Naive thymus-derived CD4-positive, alpha-beta T cell (primary cell): ENCODE measurements at regions of chrX and their contacts with region 1.

Region 1: GRCh38 chrX:130165703-130166502 is at the start of gene AIFM1:
- DNase-seq: peak; percentile 68 to 90 (median 84)
- ATAC-seq: peak; percentile 94
- H3K4me3 ChIP-seq: peak within 1 kb of the TSS; percentile 87
- H3K4me3 Mint-ChIP-seq: peak within 1 kb of the TSS; percentile 84 to 98 (median 90)
- H3K27ac ChIP-seq: peak within 1 kb of the TSS; percentile 78
- H3K27ac Mint-ChIP-seq: peak within 1 kb of the TSS; percentile 85 to 96 (median 92)
- H3K4me1 ChIP-seq: peaks cover 8 to 10% of the 10 kb centered on the region in 2 donors
- H3K4me1 Mint-ChIP-seq: peaks cover 6 to 41% (median 32%) of the 10 kb centered on the region in 7 donors
- H3K27me3 ChIP-seq: no peaks in the 10 kb centered on the region
- H3K27me3 Mint-ChIP-seq: no peaks in the 10 kb centered on the region
- total RNA-seq, gene AIFM1: 11.6 to 35.8 (median 21.1) TPM

Region 2: DNA sequence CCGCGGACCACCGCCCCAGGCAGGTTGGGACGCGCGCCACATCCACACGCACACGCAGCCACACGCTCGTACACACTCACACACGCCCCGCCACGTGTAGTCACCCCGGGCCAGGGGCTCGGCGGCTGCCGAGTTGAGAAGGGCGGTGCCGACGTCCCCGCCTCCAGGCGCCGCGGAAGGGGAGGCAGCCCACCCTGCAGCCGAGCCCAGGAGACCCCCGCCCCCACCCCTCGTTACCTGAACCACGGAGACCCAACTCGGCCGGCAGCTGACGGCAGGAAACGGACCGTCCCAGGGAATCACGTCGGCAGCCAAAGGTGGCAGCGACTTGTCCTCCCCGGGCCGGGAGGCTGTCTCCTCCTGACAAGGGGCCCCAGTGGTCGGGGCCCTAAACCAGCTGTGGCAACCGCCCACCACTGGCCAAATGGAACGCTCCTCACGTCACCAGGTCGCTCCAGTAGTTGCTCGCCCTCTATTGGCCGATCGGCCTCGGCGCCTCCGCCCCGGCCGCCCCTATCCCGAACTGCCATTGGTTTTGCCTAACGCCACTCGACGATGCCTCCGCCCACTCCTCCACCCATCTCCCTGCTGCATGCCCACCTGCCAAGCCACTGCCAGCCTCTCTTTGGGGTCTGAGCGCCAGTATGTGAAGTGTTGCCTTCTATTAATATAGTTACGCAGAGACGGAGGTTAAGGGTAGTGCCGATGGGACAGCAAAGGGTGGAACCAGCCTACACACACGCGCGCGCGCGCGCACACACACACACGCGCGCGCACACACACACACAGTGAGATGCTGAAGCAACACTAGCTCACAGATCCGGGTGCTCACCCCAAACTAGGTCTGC is 322.2 kb before region 1 on chrX and contains the start of gene ZDHHC9:
- CTCF ChIA-PET with region 1: no interaction called
- POLR2A ChIA-PET with region 1: no interaction called
- intact Hi-C with region 1: loop called in 1 of 2 experiments (anchors 5 kb)
- DNase-seq: peak; percentile 62 to 85 (median 81)
- ATAC-seq: peak; percentile 98
- H3K4me3 ChIP-seq: peak within 1 kb of the TSS; percentile 95
- H3K4me3 Mint-ChIP-seq: peak within 1 kb of the TSS; percentile 86 to 98 (median 92)
- H3K27ac ChIP-seq: peak within 1 kb of the TSS; percentile 76
- H3K27ac Mint-ChIP-seq: peak within 1 kb of the TSS; percentile 68 to 91 (median 80)
- H3K4me1 ChIP-seq: peaks cover 5 to 15% of the 10 kb centered on the region in 2 donors
- H3K4me1 Mint-ChIP-seq: peaks cover 4 to 39% (median 28%) of the 10 kb centered on the region in 7 donors
- H3K27me3 ChIP-seq: no peaks in the 10 kb centered on the region
- H3K27me3 Mint-ChIP-seq: no peaks in the 10 kb centered on the region
- total RNA-seq, gene ZDHHC9: 4.9 to 9.1 (median 7.1) TPM

Region 3: GRCh38 chrX:129982274-129983251 is 183.3 kb before region 1 on chrX and contains the start of gene BCORL1:
- CTCF ChIA-PET with region 1: no interaction called
- POLR2A ChIA-PET with region 1: no interaction called
- intact Hi-C with region 1: loop called in 1 of 2 experiments (anchors 2 kb)
- DNase-seq: peak; percentile 62 to 89 (median 84)
- ATAC-seq: peak; percentile 96
- H3K4me3 ChIP-seq: peak within 1 kb of the TSS; percentile 61
- H3K4me3 Mint-ChIP-seq: peak within 1 kb of the TSS in 1 of 10 donors; percentile 85
- H3K27ac ChIP-seq: no peak within 1 kb of the TSS
- H3K27ac Mint-ChIP-seq: peak within 1 kb of the TSS in 7 of 9 donors; percentile 31 to 82 (median 59)
- H3K4me1 ChIP-seq: no peaks in the 10 kb centered on the region
- H3K4me1 Mint-ChIP-seq: peaks cover 19 to 34% (median 27%) of the 10 kb centered on the region in 7 donors
- H3K27me3 ChIP-seq: no peaks in the 10 kb centered on the region
- H3K27me3 Mint-ChIP-seq: peaks cover 0 to 30% (median 0%) of the 10 kb centered on the region in 5 donors
- total RNA-seq, gene BCORL1: 5.8 to 8.9 (median 8.2) TPM

Region 4: GRCh38 chrX:130066975-130067615 is 98.8 kb before region 1 on chrX:
- CTCF ChIA-PET with region 1: no interaction called
- POLR2A ChIA-PET with region 1: no interaction called
- intact Hi-C with region 1: no loop called
- DNase-seq: no peak
- ATAC-seq: no peak
- H3K4me3 ChIP-seq: no peak overlapping the region
- H3K4me3 Mint-ChIP-seq: no peak overlapping the region
- H3K27ac ChIP-seq: no peak overlapping the region
- H3K27ac Mint-ChIP-seq: peak overlapping the region in 1 of 9 donors; percentile 62
- H3K4me1 ChIP-seq: no peaks in the 10 kb centered on the region
- H3K4me1 Mint-ChIP-seq: peaks cover 0 to 12% (median 0%) of the 10 kb centered on the region in 7 donors
- H3K27me3 ChIP-seq: no peaks in the 10 kb centered on the region
- H3K27me3 Mint-ChIP-seq: no peaks in the 10 kb centered on the region

Region 5: GRCh38 chrX:130091958-130092522 is 73.9 kb before region 1 on chrX:
- CTCF ChIA-PET with region 1: interaction called, 4 read pairs
- POLR2A ChIA-PET with region 1: interaction called, 7 read pairs
- intact Hi-C with region 1: loop called (anchors 2 kb)
- DNase-seq: peak; percentile 46 to 91 (median 87)
- ATAC-seq: peak; percentile 98
- H3K4me3 ChIP-seq: peak overlapping the region; percentile 64
- H3K4me3 Mint-ChIP-seq: peak overlapping the region; percentile 74 to 92 (median 86)
- H3K27ac ChIP-seq: peak overlapping the region; percentile 68
- H3K27ac Mint-ChIP-seq: peak overlapping the region; percentile 89 to 97 (median 95)
- H3K4me1 ChIP-seq: peaks cover 44% of the 10 kb centered on the region in 2 donors
- H3K4me1 Mint-ChIP-seq: peaks cover 13 to 84% (median 52%) of the 10 kb centered on the region in 7 donors
- H3K27me3 ChIP-seq: no peaks in the 10 kb centered on the region
- H3K27me3 Mint-ChIP-seq: no peaks in the 10 kb centered on the region

Region 6: DNA sequence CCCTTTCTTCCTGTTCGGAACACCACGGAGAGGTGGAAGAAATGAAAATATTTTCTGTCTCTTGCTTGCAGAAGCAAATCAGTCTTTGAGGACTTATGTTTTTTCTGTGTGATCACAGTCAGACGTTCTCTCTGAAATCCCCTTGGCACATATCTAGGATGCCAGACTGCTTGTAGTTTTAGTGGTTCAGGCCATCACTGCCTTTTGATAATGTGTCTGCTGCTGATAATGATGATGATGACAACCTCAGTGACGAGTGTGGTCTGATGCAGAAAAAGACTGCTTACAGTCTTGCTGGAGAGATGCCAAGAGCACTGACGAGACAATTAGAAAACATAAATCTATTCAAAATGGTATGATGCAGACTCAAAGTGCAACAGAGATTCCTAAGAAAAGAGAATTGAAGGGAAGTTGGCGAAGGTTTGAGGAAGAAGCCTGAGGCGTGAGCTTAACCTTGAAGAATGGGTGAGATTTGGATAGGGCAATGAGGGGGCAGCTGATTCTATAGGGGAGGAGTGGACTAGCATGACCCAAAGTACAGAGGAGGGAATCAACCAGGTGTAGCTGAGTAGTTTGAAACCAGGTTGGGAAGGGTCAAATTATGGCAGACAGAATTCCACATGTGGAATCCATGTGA is 13.8 kb after region 1 on chrX:
- CTCF ChIA-PET with region 1: interaction called, 3 read pairs
- POLR2A ChIA-PET with region 1: interaction called, 9 read pairs
- intact Hi-C with region 1: loop called in 1 of 2 experiments (anchors 2 kb)
- DNase-seq: peak in 5 of 9 donors; percentile 12 to 59 (median 44)
- ATAC-seq: peak; percentile 74
- H3K4me3 ChIP-seq: no peak overlapping the region
- H3K4me3 Mint-ChIP-seq: peak overlapping the region in 8 of 10 donors; percentile 1 to 53 (median 19)
- H3K27ac ChIP-seq: peak overlapping the region; percentile 57
- H3K27ac Mint-ChIP-seq: peak overlapping the region; percentile 54 to 94 (median 88)
- H3K4me1 ChIP-seq: peaks cover 6 to 27% of the 10 kb centered on the region in 2 donors
- H3K4me1 Mint-ChIP-seq: peaks cover 15 to 60% (median 49%) of the 10 kb centered on the region in 7 donors
- H3K27me3 ChIP-seq: no peaks in the 10 kb centered on the region
- H3K27me3 Mint-ChIP-seq: no peaks in the 10 kb centered on the region

Region 7: DNA sequence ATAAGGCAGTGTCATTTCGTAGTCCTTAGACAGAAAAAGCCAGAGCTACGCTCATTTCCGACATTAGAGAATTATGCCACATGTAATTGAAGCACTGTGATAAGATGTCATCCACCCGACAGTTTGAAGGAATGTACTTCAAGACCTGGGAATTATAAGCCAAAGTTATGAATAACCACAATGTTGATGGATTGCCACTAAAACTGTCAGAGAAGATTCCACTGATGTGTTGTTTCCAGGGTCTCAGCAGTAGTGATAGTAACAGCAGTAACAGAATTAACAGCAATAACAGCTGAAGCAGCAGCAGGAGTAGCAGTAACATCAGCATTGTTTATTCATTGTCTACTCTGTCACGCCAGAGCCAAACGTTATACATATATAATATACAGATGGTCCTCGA is 30.6 kb after region 1 on chrX:
- CTCF ChIA-PET with region 1: no interaction called
- POLR2A ChIA-PET with region 1: no interaction called
- intact Hi-C with region 1: loop called in 1 of 2 experiments (anchors 1 kb)
- DNase-seq: no peak
- ATAC-seq: no peak
- H3K4me3 ChIP-seq: no peak overlapping the region
- H3K4me3 Mint-ChIP-seq: no peak overlapping the region
- H3K27ac ChIP-seq: no peak overlapping the region
- H3K27ac Mint-ChIP-seq: peak overlapping the region in 1 of 9 donors; percentile 38
- H3K4me1 ChIP-seq: no peaks in the 10 kb centered on the region
- H3K4me1 Mint-ChIP-seq: peaks cover 0 to 4% (median 0%) of the 10 kb centered on the region in 7 donors
- H3K27me3 ChIP-seq: no peaks in the 10 kb centered on the region
- H3K27me3 Mint-ChIP-seq: no peaks in the 10 kb centered on the region

Region 8: DNA sequence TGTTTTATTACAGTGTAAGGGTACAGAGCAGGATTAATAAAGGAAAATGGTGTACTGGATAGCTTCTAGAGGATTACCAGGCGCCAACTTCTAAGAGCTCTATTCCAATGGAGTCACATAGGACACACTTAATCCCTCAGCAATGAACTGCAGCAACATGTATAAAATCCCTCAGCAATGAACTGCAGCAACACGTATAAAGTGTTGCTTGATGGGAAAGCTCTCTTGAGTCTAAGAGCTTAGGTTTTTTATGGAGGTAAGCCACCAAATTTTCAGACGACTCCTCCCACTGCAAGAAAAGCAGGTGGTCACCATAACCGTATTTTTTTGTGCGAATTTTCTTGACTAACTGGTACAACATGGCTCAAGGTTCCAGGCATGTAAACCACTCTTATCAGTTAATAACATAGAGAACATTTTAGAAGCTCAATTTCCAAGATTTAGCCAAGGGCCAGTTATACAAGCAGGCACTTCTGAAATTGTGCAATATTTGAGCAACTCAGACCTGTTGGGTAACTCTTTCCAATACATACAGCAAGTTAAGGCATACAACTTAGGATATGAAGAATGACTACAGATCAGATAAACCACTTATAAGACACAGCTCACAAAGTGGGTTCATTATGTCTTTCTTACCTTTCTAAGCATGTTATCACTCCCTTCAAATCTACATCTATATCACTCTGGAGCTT is 58.8 kb after region 1 on chrX:
- CTCF ChIA-PET with region 1: no interaction called
- POLR2A ChIA-PET with region 1: no interaction called
- intact Hi-C with region 1: no loop called
- DNase-seq: no peak
- ATAC-seq: no peak
- H3K4me3 ChIP-seq: no peak overlapping the region
- H3K4me3 Mint-ChIP-seq: no peak overlapping the region
- H3K27ac ChIP-seq: no peak overlapping the region
- H3K27ac Mint-ChIP-seq: no peak overlapping the region
- H3K4me1 ChIP-seq: no peaks in the 10 kb centered on the region
- H3K4me1 Mint-ChIP-seq: peaks cover 0 to 7% (median 2%) of the 10 kb centered on the region in 7 donors
- H3K27me3 ChIP-seq: no peaks in the 10 kb centered on the region
- H3K27me3 Mint-ChIP-seq: no peaks in the 10 kb centered on the region